ENCODE measurements at regions of chr1 and their contacts with region 1.

Region 1: DNA sequence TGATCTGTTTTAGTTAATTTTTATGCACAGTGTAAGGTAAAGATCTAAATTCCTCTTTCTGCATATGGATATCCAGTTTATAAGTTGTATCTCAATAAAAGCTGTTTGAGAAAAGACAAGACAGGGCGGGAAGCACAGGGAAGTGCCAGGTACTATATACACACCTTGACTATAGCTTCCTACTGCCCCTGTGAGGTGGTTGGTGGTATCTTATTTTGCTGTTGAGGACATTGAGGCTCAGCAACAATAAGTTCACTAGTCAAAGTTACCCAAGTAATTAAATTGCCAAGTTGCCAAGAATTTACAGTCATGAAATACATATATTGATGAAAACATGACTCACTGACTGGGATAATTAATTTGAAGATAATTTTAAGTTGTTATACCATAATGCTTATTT is 109.1 kb downstream of the CD247 start:
- DNase-seq: peak in 1 of 35 experiments; percentile 37
- ATAC-seq: peak in 3 of 4 experiments; percentile 45 to 63 (median 62)
- H3K4me3 ChIP-seq: no peak overlapping the region
- H3K4me3 Mint-ChIP-seq: no peak overlapping the region
- H3K27ac ChIP-seq: no peak overlapping the region
- H3K27ac Mint-ChIP-seq: peak overlapping the region in 1 of 2 donors; percentile 5
- H3K4me1 ChIP-seq: no peaks in the 10 kb centered on the region
- H3K4me1 Mint-ChIP-seq: peaks cover 6 to 19% (median 12%) of the 10 kb centered on the region in 3 donors
- H3K27me3 ChIP-seq: no peaks in the 10 kb centered on the region
- H3K27me3 Mint-ChIP-seq: no peaks in the 10 kb centered on the region

Region 2: DNA sequence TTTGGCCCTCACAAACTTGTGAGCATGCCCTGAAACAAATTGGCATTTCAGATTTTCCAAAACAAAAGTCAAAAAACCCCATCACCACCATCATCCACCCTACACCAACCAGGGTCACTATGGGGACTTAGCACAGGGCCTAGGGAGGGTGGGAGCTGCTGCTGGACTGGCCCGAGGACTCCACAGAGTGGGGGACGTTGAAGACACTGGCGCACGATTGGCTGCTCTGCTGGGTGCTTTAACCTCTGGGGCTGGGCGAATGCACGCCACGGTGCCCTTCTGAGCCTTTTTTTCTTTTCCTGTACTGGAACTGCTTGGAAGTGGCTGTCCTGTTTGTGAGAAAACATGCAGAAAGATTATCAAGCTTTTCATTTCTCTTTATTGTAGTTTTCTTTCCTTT is 16.3 kb after region 1 on chr1:
- CTCF ChIA-PET with region 1: no interaction called
- POLR2A ChIA-PET with region 1: interaction called in 1 of 2 experiments, 13 read pairs
- DNase-seq: no peak
- ATAC-seq: no peak
- H3K4me3 ChIP-seq: no peak overlapping the region
- H3K4me3 Mint-ChIP-seq: no peak overlapping the region
- H3K27ac ChIP-seq: no peak overlapping the region
- H3K27ac Mint-ChIP-seq: peak overlapping the region; percentile 52 to 53
- H3K4me1 ChIP-seq: peaks cover 0 to 17% of the 10 kb centered on the region in 2 experiments
- H3K4me1 Mint-ChIP-seq: peaks cover 20 to 45% (median 42%) of the 10 kb centered on the region in 3 donors
- H3K27me3 ChIP-seq: no peaks in the 10 kb centered on the region
- H3K27me3 Mint-ChIP-seq: no peaks in the 10 kb centered on the region